H1 (cell line): ENCODE measurements at regions of chr19 and their contacts with region 1.

Region 1: DNA sequence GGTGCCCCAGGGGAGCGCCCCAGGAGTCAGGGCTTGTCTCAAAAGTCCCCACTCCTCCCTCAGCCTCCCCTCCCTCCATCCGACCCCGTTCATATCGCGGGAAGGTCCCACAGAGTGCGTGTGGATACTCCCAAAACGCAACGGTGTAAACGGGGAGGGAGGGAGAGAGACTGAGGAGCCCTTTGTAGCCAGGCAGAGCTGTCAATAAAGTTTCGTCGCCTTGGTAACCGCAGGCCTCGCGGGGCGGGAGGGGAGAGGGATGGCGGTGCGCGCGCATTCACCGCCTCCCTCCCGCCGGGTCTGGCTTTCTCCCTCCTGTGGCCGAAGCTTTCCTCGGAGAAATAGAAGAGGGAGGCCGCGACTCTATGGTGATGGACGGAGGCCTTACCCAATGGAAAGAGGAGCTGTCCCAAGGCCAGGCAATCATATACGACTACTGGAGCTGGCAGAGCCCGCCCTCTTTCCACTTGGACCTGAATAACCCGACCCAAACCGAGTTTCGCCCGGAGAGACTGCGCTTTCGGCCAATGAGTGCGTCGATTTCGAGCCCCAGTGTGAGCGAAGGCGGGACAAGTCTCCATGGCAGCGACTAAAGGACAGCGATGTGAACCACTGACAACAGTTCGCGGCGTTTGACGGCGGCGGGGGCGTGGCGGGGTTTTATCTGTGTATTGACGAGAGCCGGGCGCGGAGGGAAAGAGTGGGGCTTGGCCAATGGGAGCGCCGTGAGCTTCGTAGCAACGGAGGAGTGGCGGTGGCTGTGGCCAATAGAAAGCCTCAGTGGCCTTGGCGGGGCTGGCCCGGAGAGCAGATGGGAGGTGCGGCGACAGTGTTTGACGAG is at the start of gene KMT5C:
- DNase-seq: peak; percentile 100
- H3K4me3 ChIP-seq: peak within 1 kb of the TSS; percentile 69 to 85 (median 84)
- H3K27ac ChIP-seq: peak within 1 kb of the TSS; percentile 99
- H3K4me1 ChIP-seq: peaks cover 0 to 16% (median 9%) of the 10 kb centered on the region in 4 experiments; a peak in 6 of 7 replicates
- H3K27me3 ChIP-seq: peaks cover 0 to 3% (median 0%) of the 10 kb centered on the region in 4 experiments; a peak in 1 of 7 replicates
- CTCF ChIP-seq: peak in 1 of 3 experiments; percentile 7; a peak in 1 of 4 replicates
- EP300 ChIP-seq: no peak
- POLR2A ChIP-seq: no peak; a peak in 1 of 3 replicates
- RAD21 ChIP-seq: no peak; a peak in 1 of 4 replicates
- total RNA-seq, gene KMT5C: 31.5 and 33.4 TPM in 2 replicates

Region 2: DNA sequence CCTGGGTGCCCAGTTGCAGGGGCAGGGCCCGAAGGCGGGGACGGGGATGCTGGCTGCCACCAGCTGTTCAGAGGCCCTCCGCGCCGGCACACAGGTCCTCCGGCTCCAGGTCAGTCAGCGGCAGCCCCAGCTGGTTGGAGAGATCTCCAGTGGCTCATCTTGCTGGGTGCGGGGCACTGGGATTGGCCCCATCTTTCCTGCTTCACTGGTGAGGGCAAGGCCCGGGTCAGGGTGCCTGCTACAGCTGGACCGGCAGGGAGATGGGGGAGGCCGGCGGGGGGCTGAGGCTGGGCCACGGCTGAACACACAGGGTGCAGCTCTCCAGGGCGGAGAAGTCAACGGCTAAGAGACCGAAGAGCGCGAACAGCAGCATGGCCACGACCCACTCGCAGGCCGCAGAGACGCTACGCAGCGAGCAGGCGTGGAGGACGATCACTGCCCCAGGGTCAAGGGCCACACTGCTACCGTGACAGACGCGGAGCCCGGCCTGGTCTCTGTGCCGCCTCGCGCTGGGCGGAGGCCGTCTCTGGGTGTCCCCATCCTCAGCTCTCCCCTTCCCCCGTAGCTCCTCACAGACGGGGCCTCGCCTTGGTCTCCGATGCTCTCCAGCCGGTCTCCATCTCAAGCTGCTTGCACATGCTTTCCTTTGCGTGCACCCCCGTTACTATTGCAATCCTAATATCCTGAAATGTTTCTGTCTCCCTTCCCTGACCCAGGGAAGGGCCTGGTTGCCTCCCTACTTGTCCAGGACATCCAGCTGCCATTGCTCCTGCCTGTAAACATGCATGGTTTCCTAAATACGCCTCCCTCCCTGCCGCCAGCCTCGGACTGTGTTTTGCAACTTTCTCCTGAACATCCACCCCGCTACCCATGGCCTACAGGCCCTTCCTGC is 26.4 kb before region 1 on chr19:
- CTCF ChIA-PET with region 1: interaction called, 6 read pairs
- POLR2A ChIA-PET with region 1: interaction called, 17 read pairs
- DNase-seq: no peak
- H3K4me3 ChIP-seq: no peak overlapping the region
- H3K27ac ChIP-seq: no peak overlapping the region
- H3K4me1 ChIP-seq: no peaks in the 10 kb centered on the region
- H3K27me3 ChIP-seq: no peaks in the 10 kb centered on the region
- CTCF ChIP-seq: no peak
- EP300 ChIP-seq: no peak
- POLR2A ChIP-seq: no peak; a peak in 1 of 3 replicates
- RAD21 ChIP-seq: no peak

Region 3: DNA sequence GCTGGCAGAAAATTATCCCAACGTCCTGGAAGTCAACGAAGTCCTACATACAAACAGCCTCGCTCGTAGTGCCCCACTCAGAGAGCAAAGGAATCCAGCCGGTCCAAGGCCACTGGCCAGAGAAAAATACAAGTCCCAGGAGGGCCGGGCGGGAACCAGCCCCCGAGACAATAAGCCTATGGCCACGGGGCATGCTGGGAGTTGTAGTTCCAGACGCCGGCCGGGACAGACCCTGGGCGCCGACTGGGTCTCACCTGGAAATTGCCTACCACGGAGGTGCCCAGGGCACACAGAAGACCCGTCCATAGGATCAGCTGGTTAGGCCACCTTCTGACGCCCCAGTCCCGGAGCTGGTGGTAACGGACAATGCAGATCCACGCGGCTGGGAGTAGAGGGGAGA is 19.5 kb before region 1 on chr19:
- CTCF ChIA-PET with region 1: interaction called, 12 read pairs
- POLR2A ChIA-PET with region 1: interaction called, 17 read pairs
- DNase-seq: peak; percentile 61 to 93
- H3K4me3 ChIP-seq: peak overlapping the region; percentile 24 to 56 (median 37); a peak in 7 of 8 replicates
- H3K27ac ChIP-seq: no peak overlapping the region
- H3K4me1 ChIP-seq: peaks cover 0 to 10% (median 5%) of the 10 kb centered on the region in 4 experiments; a peak in 6 of 7 replicates
- H3K27me3 ChIP-seq: no peaks in the 10 kb centered on the region
- CTCF ChIP-seq: no peak
- EP300 ChIP-seq: no peak
- POLR2A ChIP-seq: no peak; a peak in 1 of 3 replicates
- RAD21 ChIP-seq: no peak

Region 4: DNA sequence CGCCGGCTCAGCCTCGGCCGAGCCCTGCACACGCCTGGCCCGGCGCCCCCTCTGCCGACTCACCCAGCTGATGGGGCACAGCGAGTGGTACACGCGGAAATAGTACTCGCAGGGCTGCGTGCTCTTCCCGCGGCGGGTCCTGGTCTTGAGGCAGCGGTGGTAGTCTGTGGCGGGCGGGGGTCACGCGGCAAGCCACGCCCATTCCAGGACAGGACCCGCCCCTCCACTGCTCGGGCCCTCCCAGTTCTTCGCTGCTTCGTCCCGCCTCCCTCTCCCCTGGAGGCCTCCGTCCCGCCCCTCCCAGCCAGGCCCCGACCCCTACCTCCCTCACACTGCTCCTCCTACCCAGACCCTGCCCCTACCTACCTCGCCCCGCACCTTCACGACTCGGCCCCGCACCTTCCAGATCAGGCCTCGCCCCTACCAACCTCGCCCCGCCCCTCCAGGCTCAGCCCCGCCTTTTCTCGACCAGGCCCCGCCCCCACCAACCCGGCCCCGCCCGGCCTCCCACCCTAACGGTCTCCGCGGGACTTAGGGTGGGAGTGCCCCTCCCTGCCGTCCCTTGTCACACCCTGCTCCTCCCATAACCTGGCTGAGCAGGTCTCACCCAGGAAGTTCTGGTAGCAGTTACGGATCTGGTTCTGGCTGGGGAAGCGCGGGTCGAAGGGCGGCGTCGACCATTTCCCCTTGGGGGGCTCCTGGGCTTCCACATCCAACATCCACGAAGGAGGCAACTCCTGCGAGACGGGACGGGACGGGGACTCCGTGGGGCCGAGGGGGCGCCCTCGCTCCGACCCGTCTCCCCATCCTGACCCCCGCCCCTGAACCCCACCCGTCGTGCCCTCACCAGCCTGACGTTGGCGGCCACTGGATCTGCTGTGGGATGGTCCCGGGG is 14.8 kb after region 1 on chr19:
- CTCF ChIA-PET with region 1: interaction called, 7 read pairs
- POLR2A ChIA-PET with region 1: interaction called, 30 read pairs
- DNase-seq: peak in 1 of 2 experiments; percentile 92
- H3K4me3 ChIP-seq: peak overlapping the region; percentile 32 to 66 (median 50)
- H3K27ac ChIP-seq: no peak overlapping the region
- H3K4me1 ChIP-seq: peaks cover 0 to 27% (median 13%) of the 10 kb centered on the region in 4 experiments; a peak in 6 of 7 replicates
- H3K27me3 ChIP-seq: peaks cover 17 to 56% (median 44%) of the 10 kb centered on the region in 4 experiments
- CTCF ChIP-seq: no peak
- EP300 ChIP-seq: no peak
- POLR2A ChIP-seq: no peak; a peak in 1 of 3 replicates
- RAD21 ChIP-seq: no peak; a peak in 1 of 4 replicates

Region 5: GRCh38 chr19:55376241-55376933 is 37.1 kb after region 1 on chr19 and contains the start of gene TMEM190:
- CTCF ChIA-PET with region 1: no interaction called
- POLR2A ChIA-PET with region 1: interaction called, 14 read pairs
- DNase-seq: peak in 1 of 2 experiments; percentile 76
- H3K4me3 ChIP-seq: peak within 1 kb of the TSS; percentile 35 to 60 (median 44); a peak in 7 of 8 replicates
- H3K27ac ChIP-seq: no peak within 1 kb of the TSS
- H3K4me1 ChIP-seq: peaks cover 5 to 49% (median 36%) of the 10 kb centered on the region in 4 experiments
- H3K27me3 ChIP-seq: peaks cover 8 to 34% (median 25%) of the 10 kb centered on the region in 4 experiments
- CTCF ChIP-seq: no peak
- EP300 ChIP-seq: no peak
- POLR2A ChIP-seq: no peak
- RAD21 ChIP-seq: no peak
- total RNA-seq, gene TMEM190: 1.4 TPM in 1 of 2 replicates, not detected in the other